Right cardiac atrium (tissue), 5 donors: ENCODE measurements at regions of chr15 and their contacts with region 1.

Region 1: DNA sequence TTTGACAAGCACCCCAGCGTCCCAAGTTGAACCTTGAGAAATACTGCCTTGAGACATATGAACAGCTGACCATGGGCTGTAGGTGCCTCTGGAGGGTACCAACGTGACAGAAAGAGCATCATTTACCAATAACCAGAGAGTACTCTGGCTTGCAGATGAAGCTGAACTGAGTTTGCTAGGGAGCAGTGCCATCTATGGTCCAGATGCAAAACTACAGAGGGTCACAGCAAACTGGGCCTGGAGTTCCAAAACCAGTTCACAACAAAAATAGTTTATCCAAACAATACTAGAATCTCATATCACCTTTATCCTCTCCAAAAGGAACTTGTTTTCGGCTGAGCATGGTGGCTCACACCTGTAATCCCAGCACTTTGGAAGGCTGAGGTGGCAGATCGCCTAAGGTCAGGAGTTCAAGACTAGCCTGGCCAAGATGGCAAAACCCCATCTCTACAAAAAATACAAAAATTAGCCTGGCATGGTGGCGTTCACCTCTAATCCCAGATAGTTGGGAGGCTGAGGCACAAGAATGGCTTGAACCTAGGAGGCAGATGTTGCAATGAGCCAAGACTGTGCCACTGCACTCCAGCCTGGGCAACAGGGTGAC is 69.3 kb downstream of the CHAC1 start:
- DNase-seq: peak in 1 of 3 donors; percentile 17
- ATAC-seq: peak; percentile 48 to 69
- H3K4me3 ChIP-seq: no peak overlapping the region
- H3K27ac ChIP-seq: no peak overlapping the region
- H3K4me1 ChIP-seq: peaks cover 2% of the 10 kb centered on the region
- H3K27me3 ChIP-seq: no peaks in the 10 kb centered on the region

Region 2: DNA sequence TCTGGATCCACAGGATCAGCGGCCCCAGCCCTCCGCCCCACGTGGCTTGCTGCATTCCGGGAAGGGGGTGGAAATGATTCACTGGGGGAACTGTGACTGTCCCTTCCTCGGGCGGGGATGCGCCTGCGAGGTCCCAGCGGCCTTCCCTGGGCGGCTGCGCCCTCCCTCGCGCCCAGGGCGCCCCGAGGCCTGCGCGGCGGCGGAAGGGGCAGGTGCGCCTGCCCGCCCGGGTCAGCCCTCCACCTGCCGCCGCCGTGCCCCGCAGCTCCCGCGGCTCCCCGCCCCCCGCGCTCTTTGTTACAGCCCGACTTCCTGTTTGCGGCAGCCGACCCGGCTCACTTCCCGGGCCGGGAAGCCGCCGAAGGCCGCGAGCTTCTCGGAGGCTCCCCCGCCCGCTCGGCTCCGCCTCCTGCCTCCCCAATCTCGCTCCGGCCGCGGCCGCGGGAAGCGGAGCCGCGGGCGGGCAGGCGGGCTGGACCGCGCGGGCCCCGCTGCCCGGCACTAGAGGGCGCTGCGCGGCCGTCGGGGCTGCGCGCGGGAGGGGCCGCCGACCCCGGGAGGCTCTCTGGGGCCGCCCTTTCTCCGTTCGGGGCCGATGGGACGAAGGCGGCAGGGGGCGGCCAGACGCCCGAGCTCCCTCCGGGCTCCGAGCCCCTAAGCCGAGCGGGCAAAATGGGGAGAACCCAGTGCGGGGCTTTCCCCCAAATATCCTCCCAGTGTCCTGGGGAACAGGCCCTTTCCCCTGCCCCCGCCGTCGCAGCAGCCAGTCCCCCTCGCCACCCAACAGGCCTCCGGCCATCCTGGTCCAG is 80.9 kb before region 1 on chr15:
- intact Hi-C with region 1: loop called in 1 of 4 experiments (anchors 10 kb)
- DNase-seq: peak; percentile 82 to 92 (median 92)
- ATAC-seq: peak; percentile 78
- H3K4me3 ChIP-seq: peak overlapping the region; percentile 70
- H3K27ac ChIP-seq: peak overlapping the region; percentile 81
- H3K4me1 ChIP-seq: peaks cover 7% of the 10 kb centered on the region
- H3K27me3 ChIP-seq: no peaks in the 10 kb centered on the region

Region 3: DNA sequence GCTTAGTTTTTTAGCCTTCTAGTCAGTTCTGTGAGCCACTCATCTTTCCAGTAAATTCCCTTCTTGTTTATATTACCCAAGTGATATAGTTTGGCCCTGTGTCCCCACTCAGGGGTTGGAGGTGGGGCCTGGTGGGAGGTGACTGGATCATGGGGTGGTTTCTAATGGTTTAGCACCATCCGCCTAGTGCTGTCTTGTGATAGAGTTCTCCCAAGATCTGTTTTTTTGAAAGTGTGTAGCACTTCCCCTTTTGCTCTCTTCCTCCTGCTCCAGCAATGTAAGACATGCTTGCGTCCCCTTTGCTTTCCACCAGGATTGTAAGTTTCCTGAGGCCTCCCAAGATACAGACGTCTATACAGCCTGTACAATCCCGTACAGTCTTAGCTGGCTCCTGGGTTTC is 147.2 kb after region 1 on chr15:
- intact Hi-C with region 1: loop called in 1 of 4 experiments (anchors 10 kb)
- DNase-seq: peak in 1 of 3 donors; percentile 44
- ATAC-seq: no peak
- H3K4me3 ChIP-seq: no peak overlapping the region
- H3K27ac ChIP-seq: no peak overlapping the region
- H3K4me1 ChIP-seq: no peaks in the 10 kb centered on the region
- H3K27me3 ChIP-seq: peaks cover 3% of the 10 kb centered on the region